Gastrocnemius medialis (tissue), 4 donors: ENCODE measurements at regions of chr2 and their contacts with region 1.

Region 1: GRCh38 chr2:37523814-37524362 is 147.6 kb downstream of the CDC42EP3 start:
- DNase-seq: peak; percentile 28 to 60
- ATAC-seq: peak; percentile 96 to 98
- H3K4me3 ChIP-seq: no peak overlapping the region
- H3K27ac ChIP-seq: peak overlapping the region; percentile 3 to 65 (median 31)
- H3K4me1 ChIP-seq: peaks cover 14 to 16% of the 10 kb centered on the region in 2 donors
- H3K27me3 ChIP-seq: no peaks in the 10 kb centered on the region
- CTCF ChIP-seq: no peak
- POLR2A ChIP-seq: no peak

Region 2: DNA sequence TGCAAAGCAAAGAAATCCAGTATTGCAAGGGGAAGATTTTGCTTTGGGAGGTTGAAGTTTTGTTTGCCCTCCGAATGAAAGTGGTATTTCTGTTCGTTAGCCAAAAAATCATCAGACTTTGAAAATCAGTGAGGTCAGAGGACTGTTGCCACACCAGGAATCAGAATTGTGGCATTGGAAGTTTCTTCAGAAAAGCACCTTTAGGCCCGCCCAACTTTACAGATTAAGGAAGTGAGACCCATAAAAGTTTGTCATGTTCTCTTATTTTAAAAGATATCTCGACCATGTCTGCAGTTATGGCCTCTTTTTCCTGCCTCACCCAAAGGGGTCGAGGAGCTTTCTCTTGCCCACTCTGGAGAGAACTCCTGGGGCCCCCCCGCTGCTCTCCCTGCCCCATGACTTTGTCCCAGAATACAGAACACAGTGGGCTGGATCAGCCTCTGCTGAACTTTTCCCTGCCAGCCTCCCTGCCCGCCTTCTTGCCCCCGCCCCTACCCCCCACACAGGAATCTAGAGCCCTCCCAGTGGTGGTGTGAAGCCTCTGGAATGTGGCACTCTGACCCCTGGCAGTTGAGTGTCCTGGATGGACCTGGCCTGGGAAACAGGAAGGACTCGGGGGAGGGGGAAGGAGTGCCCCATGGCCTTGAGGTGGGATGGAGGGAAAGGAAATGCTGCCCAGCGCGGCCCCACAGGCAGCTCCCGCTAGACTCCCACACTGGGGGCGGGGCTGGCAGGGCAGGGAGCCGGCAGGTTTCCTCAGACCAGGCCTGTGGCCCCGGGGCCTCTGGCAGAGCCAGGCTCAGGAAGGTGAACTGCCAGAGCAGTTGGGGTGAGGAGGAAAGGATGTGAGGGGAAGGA is 1143.0 kb before region 1 on chr2:
- in situ Hi-C with region 1: no loop called
- intact Hi-C with region 1: no loop called
- DNase-seq: no peak
- ATAC-seq: no peak
- H3K4me3 ChIP-seq: no peak overlapping the region
- H3K27ac ChIP-seq: peak overlapping the region in 3 of 4 donors; percentile 28 to 35 (median 32)
- H3K4me1 ChIP-seq: peaks cover 48 to 78% of the 10 kb centered on the region in 2 donors
- H3K27me3 ChIP-seq: no peaks in the 10 kb centered on the region
- CTCF ChIP-seq: no peak
- POLR2A ChIP-seq: no peak

Region 3: DNA sequence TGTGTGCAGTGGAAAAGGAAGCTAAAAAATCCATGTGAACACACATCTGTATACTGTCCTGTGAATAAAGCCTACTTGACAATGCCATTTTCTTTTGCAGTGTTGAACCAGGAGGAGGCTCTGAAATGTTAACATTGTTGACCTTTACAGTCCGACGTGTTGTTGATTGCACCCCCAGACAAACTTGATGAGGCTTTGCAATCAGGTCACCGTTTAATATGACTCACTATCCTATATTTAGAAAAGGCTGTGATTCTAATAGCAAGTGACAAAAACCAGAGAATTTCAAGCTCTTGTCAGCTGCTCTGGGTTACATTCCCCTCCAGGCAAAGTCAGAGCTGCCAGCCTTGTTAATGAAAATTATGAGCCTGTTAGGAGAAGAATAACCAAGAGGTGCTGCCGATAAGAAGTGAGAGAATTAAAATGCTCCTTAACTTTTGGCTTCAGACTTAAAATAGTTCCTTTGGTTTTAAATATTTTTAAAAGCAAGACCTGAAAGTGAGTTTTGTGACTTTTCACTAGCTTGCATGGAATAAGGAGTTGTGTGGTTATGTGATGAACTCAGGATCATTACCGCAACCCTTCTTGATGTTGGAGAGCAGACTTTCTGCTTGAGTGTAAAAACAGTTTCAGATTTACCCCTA is 17.4 kb before region 1 on chr2:
- in situ Hi-C with region 1: no loop called
- intact Hi-C with region 1: loop called (anchors 2 kb)
- DNase-seq: peak in 1 of 2 donors; percentile 19
- ATAC-seq: peak; percentile 86 to 87
- H3K4me3 ChIP-seq: no peak overlapping the region
- H3K27ac ChIP-seq: peak overlapping the region; percentile 49 to 79 (median 69)
- H3K4me1 ChIP-seq: peaks cover 31 to 39% of the 10 kb centered on the region in 2 donors
- H3K27me3 ChIP-seq: no peaks in the 10 kb centered on the region
- CTCF ChIP-seq: no peak
- POLR2A ChIP-seq: no peak

Region 4: DNA sequence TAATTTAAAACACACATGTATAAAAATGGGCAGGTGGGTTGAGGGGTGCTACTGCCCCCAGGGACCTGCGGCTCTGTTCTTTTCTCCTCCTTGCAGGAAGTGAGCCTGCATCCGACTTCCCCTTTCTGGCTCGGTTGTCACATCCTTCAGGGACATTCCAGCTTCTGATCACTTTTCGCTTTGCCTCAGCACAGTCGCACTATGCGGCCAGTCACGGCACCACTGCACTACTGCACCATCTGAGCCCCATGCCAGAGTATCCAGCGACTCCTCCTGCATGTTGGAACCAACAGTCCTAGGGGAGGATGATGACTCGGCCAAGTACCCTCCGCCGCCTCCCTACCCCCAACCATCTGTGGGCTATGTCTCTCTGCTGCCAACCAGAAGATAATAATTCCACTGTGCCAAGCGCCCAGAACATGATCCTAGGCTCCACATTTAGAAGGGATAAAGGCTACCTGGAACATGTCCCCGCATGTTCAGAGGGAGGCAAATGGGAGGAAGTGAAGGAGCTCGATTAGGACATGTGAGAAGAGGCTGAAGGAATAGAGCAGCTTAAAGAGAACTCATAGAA is 130.0 kb after region 1 on chr2:
- in situ Hi-C with region 1: no loop called
- intact Hi-C with region 1: loop called (anchors 5 kb)
- DNase-seq: peak; percentile 80 to 95
- ATAC-seq: peak; percentile 83 to 85
- H3K4me3 ChIP-seq: peak overlapping the region; percentile 16 to 46 (median 27)
- H3K27ac ChIP-seq: peak overlapping the region; percentile 85 to 88 (median 87)
- H3K4me1 ChIP-seq: peaks cover 93 to 94% of the 10 kb centered on the region in 2 donors
- H3K27me3 ChIP-seq: no peaks in the 10 kb centered on the region
- CTCF ChIP-seq: no peak
- POLR2A ChIP-seq: peak; percentile 4 to 46